GM12878 (cell line): ENCODE measurements at regions of chr11 and their contacts with region 1.

Region 1: GRCh38 chr11:66842896-66843775 is at the start of gene RCE1:
- DNase-seq: peak; percentile 37
- ATAC-seq: peak; percentile 90
- H3K4me3 ChIP-seq: peak within 1 kb of the TSS; percentile 95
- H3K27ac ChIP-seq: peak within 1 kb of the TSS; percentile 99
- H3K4me1 ChIP-seq: peaks cover 16% of the 10 kb centered on the region
- H3K27me3 ChIP-seq: no peaks in the 10 kb centered on the region
- CTCF ChIP-seq: no peak
- EP300 ChIP-seq: no peak; a peak in 1 of 4 replicates
- POLR2A ChIP-seq: peak; percentile 96
- RAD21 ChIP-seq: no peak
- polyA plus RNA-seq, gene RCE1: 0.79 to 2.0 TPM

Region 2: DNA sequence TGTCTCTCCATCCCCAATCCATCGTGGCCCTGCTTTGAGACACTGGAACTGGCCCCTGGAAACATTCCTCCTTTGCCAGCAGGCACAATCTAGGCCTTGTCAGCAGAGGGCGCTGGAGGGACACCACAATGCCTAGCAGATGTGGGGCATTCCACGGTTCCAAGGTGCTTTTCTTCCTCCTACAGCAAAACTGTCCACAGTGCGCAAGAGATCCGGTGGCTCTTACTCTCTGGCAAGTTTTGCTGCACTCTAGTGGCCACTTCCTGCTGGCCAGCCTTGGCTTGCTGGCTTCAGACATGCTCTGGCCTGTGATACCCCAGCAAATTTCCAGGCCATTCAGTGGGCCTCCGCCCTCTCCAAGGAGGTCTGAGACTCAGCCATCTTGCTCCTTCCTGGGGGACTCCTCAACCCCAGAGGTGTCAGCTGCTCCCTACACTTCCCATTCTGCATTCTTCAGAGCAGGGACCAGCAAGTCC is 148.4 kb before region 1 on chr11:
- CTCF ChIA-PET with region 1: interaction called, 9 read pairs
- POLR2A ChIA-PET with region 1: no interaction called
- RAD21 ChIA-PET with region 1: interaction called, 10 read pairs
- SMC1A ChIA-PET with region 1: interaction called, 4 read pairs
- in situ Hi-C with region 1: no loop called
- intact Hi-C with region 1: no loop called
- DNase-seq: peak; percentile 58
- ATAC-seq: peak; percentile 97
- H3K4me3 ChIP-seq: no peak overlapping the region
- H3K27ac ChIP-seq: no peak overlapping the region
- H3K4me1 ChIP-seq: no peaks in the 10 kb centered on the region
- H3K27me3 ChIP-seq: no peaks in the 10 kb centered on the region; a peak in 1 of 4 replicates
- CTCF ChIP-seq: peak; percentile 94 to 99 (median 97)
- EP300 ChIP-seq: 0 out of 4 replicates have a peak, but pooled peaks of 1 of the 2 experiments have one; percentile 8
- POLR2A ChIP-seq: no peak
- RAD21 ChIP-seq: peak; percentile 95

Region 3: GRCh38 chr11:66855574-66856495 is 12.7 kb after region 1 on chr11:
- CTCF ChIA-PET with region 1: interaction called, 5 read pairs
- POLR2A ChIA-PET with region 1: interaction called, 49 read pairs
- RAD21 ChIA-PET with region 1: interaction called, 10 read pairs
- SMC1A ChIA-PET with region 1: interaction called, 14 read pairs
- in situ Hi-C with region 1: no loop called
- intact Hi-C with region 1: no loop called
- DNase-seq: peak; percentile 50
- ATAC-seq: peak; percentile 95
- H3K4me3 ChIP-seq: peak overlapping the region; percentile 64
- H3K27ac ChIP-seq: peak overlapping the region; percentile 96
- H3K4me1 ChIP-seq: peaks cover 6% of the 10 kb centered on the region
- H3K27me3 ChIP-seq: no peaks in the 10 kb centered on the region
- CTCF ChIP-seq: no peak
- EP300 ChIP-seq: no peak
- POLR2A ChIP-seq: peak; percentile 96
- RAD21 ChIP-seq: no peak

Region 4: GRCh38 chr11:66883016-66883968 is 40.2 kb after region 1 on chr11:
- CTCF ChIA-PET with region 1: interaction called, 11 read pairs
- POLR2A ChIA-PET with region 1: no interaction called
- RAD21 ChIA-PET with region 1: no interaction called
- SMC1A ChIA-PET with region 1: interaction called, 5 read pairs
- in situ Hi-C with region 1: no loop called
- intact Hi-C with region 1: no loop called
- DNase-seq: no peak
- ATAC-seq: peak; percentile 94
- H3K4me3 ChIP-seq: no peak overlapping the region
- H3K27ac ChIP-seq: no peak overlapping the region
- H3K4me1 ChIP-seq: peaks cover 3% of the 10 kb centered on the region; the same call in 1 of the 2 replicates
- H3K27me3 ChIP-seq: peaks cover 0 to 3% of the 10 kb centered on the region in 2 experiments; a peak in 2 of 4 replicates
- CTCF ChIP-seq: peak; percentile 71 to 77 (median 72)
- EP300 ChIP-seq: no peak
- POLR2A ChIP-seq: no peak
- RAD21 ChIP-seq: peak; percentile 71